ENCODE measurements at regions of chr12 and their contacts with region 1.

Region 1: GRCh38 chr12:44000309-44000952 is 164.6 kb downstream of the TMEM117 start:
- DNase-seq: peak; percentile 6
- H3K4me3 ChIP-seq: no peak overlapping the region
- H3K27ac ChIP-seq: no peak overlapping the region
- H3K27me3 ChIP-seq: no peaks in the 10 kb centered on the region
- CTCF ChIP-seq: peak; percentile 63

Region 2: GRCh38 chr12:44015335-44015941 is 15.0 kb after region 1 on chr12:
- CTCF ChIA-PET with region 1: interaction called, 10 read pairs
- POLR2A ChIA-PET with region 1: no interaction called
- DNase-seq: peak; percentile 8
- H3K4me3 ChIP-seq: no peak overlapping the region
- H3K27ac ChIP-seq: no peak overlapping the region
- H3K27me3 ChIP-seq: no peaks in the 10 kb centered on the region
- CTCF ChIP-seq: peak; percentile 66

Measured in AG04450 (cell line).